ENCODE measurements at regions of chr1 and their contacts with region 1.

Region 1: DNA sequence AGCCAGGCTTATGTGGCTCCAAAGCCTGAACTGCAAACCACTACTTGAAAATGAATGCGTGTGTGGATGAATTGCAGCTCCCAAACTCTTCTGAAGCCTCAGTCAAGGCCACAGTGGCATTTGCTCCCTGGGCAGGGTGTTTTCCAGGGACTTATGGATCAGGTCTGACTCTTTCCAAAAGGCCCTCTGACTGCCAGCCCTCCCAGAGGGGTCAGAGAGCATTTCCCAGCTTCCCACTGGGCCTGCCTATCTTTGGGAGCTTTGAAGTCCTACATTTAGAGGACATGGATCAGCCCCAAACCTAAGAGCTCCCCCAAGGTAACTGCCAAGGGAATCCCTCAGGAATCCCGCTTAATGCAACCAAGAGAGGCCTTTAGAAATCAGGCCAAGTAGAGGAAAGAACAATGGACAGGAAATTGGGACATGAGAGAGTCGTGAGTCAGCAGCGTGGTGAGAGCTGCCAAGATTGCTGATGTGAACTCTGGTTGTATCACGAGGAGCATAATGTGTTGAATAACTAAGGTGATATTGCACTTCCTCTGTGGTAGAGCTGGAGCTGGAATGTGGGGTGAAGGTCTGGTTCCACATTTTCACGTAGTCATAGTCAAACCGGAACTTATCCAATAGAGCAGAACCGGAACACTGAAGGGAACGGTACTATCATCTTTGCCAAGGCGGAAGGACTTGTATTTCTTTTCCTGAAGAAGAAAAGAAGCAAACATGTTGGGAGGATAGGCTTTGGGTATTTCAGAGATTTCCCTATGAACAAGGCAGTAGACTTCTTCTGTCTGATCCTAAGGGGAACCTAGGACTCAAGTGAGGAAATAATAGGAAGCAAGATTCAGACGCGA is 99.4 kb upstream of the JUN start:
- DNase-seq: peak; percentile 99
- H3K4me3 Mint-ChIP-seq: no peak overlapping the region
- H3K27ac Mint-ChIP-seq: peak overlapping the region; percentile 8
- H3K4me1 Mint-ChIP-seq: peaks cover 44% of the 10 kb centered on the region
- H3K27me3 Mint-ChIP-seq: no peaks in the 10 kb centered on the region
- CTCF ChIP-seq: no peak

Region 2: GRCh38 chr1:58732087-58732775 is 151.0 kb before region 1 on chr1:
- CTCF ChIA-PET with region 1: no interaction called
- POLR2A ChIA-PET with region 1: no interaction called
- intact Hi-C with region 1: no loop called
- DNase-seq: no peak
- H3K4me3 Mint-ChIP-seq: no peak overlapping the region
- H3K27ac Mint-ChIP-seq: no peak overlapping the region
- H3K4me1 Mint-ChIP-seq: peaks cover 9% of the 10 kb centered on the region
- H3K27me3 Mint-ChIP-seq: no peaks in the 10 kb centered on the region
- CTCF ChIP-seq: no peak

Region 3: GRCh38 chr1:58816072-58816746 is 67.1 kb before region 1 on chr1:
- CTCF ChIA-PET with region 1: no interaction called
- POLR2A ChIA-PET with region 1: interaction called, 4 read pairs
- intact Hi-C with region 1: loop called (anchors 5 kb)
- DNase-seq: peak; percentile 88
- H3K4me3 Mint-ChIP-seq: peak overlapping the region; percentile 78
- H3K27ac Mint-ChIP-seq: peak overlapping the region; percentile 91
- H3K4me1 Mint-ChIP-seq: peaks cover 33% of the 10 kb centered on the region
- H3K27me3 Mint-ChIP-seq: no peaks in the 10 kb centered on the region
- CTCF ChIP-seq: no peak

Region 4: GRCh38 chr1:58848818-58849411 is 34.3 kb before region 1 on chr1:
- CTCF ChIA-PET with region 1: interaction called, 4 read pairs
- POLR2A ChIA-PET with region 1: interaction called, 5 read pairs
- intact Hi-C with region 1: loop called (anchors 1 kb)
- DNase-seq: peak; percentile 99
- H3K4me3 Mint-ChIP-seq: peak overlapping the region; percentile 33
- H3K27ac Mint-ChIP-seq: no peak overlapping the region
- H3K4me1 Mint-ChIP-seq: peaks cover 23% of the 10 kb centered on the region
- H3K27me3 Mint-ChIP-seq: no peaks in the 10 kb centered on the region
- CTCF ChIP-seq: no peak

Region 5: DNA sequence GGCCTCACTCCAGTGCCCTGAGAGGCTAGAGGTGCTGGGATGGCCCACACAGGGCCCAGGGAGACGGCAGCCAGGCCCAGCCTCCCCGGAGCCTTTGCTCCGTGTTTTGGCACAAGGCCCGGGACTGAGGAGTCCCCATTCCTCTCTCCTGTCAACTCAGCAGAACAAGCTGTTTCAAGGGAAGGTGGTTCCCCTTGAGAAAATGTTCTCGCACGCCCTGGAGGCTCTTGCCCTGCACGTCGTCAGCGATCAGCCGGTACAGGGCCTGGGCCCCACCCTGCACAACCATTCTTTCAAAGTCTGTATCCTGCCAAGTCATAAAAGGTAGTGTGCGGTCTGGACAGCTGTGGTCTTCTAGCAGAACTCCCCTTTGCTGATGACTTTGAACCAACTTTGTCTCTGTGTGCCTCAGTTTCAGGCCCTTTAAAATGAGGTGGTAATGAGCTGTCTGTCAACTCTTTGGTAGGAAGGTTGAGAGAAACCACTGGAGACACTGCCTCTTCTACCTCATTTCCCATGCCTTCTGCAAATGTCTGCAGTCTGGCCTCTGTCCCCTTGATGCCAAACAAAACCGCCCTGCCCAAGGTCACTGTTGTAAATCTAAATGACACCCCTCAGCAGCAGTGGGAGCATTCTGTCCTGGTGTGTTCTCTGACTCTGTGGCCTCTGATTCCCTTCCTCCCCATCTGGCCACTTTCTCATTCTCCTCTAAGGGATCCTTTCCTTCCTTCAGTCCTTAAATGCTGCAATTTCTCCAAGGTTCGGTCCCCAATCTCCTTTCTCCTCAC is 39.2 kb after region 1 on chr1:
- CTCF ChIA-PET with region 1: interaction called, 3 read pairs
- POLR2A ChIA-PET with region 1: interaction called, 10 read pairs
- intact Hi-C with region 1: no loop called
- DNase-seq: peak; percentile 91
- H3K4me3 Mint-ChIP-seq: peak overlapping the region; percentile 7
- H3K27ac Mint-ChIP-seq: peak overlapping the region; percentile 87
- H3K4me1 Mint-ChIP-seq: peaks cover 52% of the 10 kb centered on the region
- H3K27me3 Mint-ChIP-seq: no peaks in the 10 kb centered on the region
- CTCF ChIP-seq: no peak

Measured in MCF 10A (cell line).